Activated CD4-positive, alpha-beta T cell treated with anti-CD3 and anti-CD28 coated beads for 36 hours (primary cell): ENCODE measurements at regions of chr16 and their contacts with region 1.

Region 1: GRCh38 chr16:28218104-28218503 is 6.3 kb upstream of the XPO6 start:
- DNase-seq: peak; percentile 76
- ATAC-seq: peak; percentile 100
- H3K4me3 Mint-ChIP-seq: no peak overlapping the region
- H3K27ac Mint-ChIP-seq: no peak overlapping the region
- H3K4me1 Mint-ChIP-seq: peaks cover 3% of the 10 kb centered on the region
- H3K27me3 Mint-ChIP-seq: no peaks in the 10 kb centered on the region

Region 2: DNA sequence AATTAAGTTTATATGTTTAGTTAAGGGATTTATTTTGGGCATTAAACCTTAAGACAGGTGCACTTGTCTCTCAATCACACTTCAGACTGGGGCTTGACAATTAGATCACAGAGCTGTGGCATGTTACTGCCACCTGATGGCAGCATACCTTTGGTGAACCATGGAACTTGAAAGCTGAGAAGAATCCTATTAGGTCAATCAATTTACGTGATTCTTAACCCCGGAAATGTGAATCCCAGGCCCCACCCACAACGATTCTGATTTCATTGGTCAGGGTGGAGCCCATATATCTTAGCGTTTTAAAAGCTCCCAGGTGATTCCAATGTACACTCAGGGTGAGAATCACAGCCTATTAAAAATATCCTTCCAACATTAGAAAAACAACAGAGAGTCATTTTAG is 245.6 kb before region 1 on chr16:
- CTCF ChIA-PET with region 1: interaction called, 13 read pairs
- POLR2A ChIA-PET with region 1: interaction called, 3 read pairs
- intact Hi-C with region 1: loop called in 1 of 2 experiments (anchors 1 kb)
- DNase-seq: peak; percentile 66
- ATAC-seq: peak; percentile 80
- H3K4me3 Mint-ChIP-seq: no peak overlapping the region
- H3K27ac Mint-ChIP-seq: no peak overlapping the region
- H3K4me1 Mint-ChIP-seq: peaks cover 3% of the 10 kb centered on the region
- H3K27me3 Mint-ChIP-seq: peaks cover 12% of the 10 kb centered on the region

Region 3: DNA sequence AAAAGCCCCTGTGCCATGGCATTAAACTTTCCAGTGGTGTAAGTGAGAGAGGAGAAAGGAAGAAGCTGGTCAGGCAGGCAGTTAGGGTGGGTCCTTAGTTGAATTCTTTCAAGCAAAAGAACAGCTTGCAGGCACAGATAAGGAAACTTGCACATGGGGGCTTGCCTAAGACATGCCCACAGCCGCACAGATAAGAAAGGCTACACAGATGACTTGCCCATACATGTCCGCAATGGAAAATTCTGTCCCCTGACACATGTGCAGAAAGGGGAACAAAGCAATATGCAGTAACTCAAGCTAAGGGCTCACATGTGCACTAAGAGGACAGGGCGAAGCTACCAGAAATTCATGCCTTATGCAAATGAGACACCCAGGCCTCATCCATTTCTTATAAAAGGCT is 224.5 kb before region 1 on chr16:
- CTCF ChIA-PET with region 1: interaction called, 3 read pairs
- POLR2A ChIA-PET with region 1: no interaction called
- intact Hi-C with region 1: loop called in 1 of 2 experiments (anchors 5 kb)
- DNase-seq: no peak
- ATAC-seq: no peak
- H3K4me3 Mint-ChIP-seq: no peak overlapping the region
- H3K27ac Mint-ChIP-seq: no peak overlapping the region
- H3K4me1 Mint-ChIP-seq: peaks cover 10% of the 10 kb centered on the region
- H3K27me3 Mint-ChIP-seq: no peaks in the 10 kb centered on the region

Region 4: GRCh38 chr16:28133666-28134065 is 84.4 kb before region 1 on chr16:
- CTCF ChIA-PET with region 1: interaction called, 18 read pairs
- POLR2A ChIA-PET with region 1: no interaction called
- intact Hi-C with region 1: loop called in 1 of 2 experiments (anchors 1 kb)
- DNase-seq: no peak
- ATAC-seq: no peak
- H3K4me3 Mint-ChIP-seq: no peak overlapping the region
- H3K27ac Mint-ChIP-seq: no peak overlapping the region
- H3K4me1 Mint-ChIP-seq: peaks cover 23% of the 10 kb centered on the region
- H3K27me3 Mint-ChIP-seq: no peaks in the 10 kb centered on the region

Region 5: GRCh38 chr16:28158136-28158535 is 60.0 kb before region 1 on chr16:
- CTCF ChIA-PET with region 1: interaction called, 11 read pairs
- POLR2A ChIA-PET with region 1: no interaction called
- intact Hi-C with region 1: no loop called
- DNase-seq: no peak
- ATAC-seq: no peak
- H3K4me3 Mint-ChIP-seq: no peak overlapping the region
- H3K27ac Mint-ChIP-seq: peak overlapping the region; percentile 38
- H3K4me1 Mint-ChIP-seq: peaks cover 60% of the 10 kb centered on the region
- H3K27me3 Mint-ChIP-seq: no peaks in the 10 kb centered on the region